Posterior vena cava (tissue), 2 donors: ENCODE measurements at regions of chr2 and their contacts with region 1.

Region 1: DNA sequence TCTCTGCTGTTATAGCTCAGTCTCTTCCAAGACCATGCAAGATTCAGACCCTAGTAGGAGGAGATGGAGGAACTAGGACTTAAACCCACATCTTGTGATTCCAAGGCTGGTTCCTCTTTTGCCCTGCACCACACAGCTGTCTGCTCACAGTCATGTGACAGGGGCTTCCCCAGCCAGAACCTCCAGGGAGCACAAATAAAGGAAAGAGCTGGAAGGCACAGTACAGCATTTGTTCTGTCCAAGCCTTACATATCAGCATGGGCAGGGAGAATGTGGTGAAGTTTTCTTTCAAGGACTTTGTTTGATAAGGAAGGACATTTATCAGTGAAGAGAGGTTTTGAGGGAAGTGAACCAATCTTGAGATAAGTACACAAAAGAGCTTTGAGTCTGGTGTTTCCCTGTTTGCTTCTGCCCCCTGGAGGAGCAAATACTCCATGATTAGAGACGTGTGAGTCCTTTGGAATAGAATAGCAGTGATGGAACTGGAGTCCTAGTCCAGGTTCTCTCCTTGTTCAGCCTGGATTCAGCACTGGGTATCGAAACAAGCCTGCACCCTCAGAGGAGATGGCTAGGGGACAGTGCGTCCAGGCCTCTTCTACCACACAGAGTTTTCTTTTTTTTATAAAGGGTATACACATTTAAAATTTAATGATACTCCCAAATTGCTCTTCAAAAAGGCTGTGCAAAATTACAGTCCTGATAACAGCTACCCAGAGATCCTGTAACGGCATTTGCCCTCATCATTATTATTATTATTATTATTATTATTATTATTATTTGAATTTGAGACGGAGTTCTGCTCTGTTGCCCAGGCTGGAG is 24.6 kb upstream of the CASP10 start:
- DNase-seq: no peak

Region 2: GRCh38 chr2:201618744-201619662 is 460.7 kb after region 1 on chr2:
- intact Hi-C with region 1: loop called in 1 of 2 experiments (anchors 2 kb)
- DNase-seq: peak; percentile 93